ENCODE measurements at regions of chr12 and their contacts with region 1.

Region 1: DNA sequence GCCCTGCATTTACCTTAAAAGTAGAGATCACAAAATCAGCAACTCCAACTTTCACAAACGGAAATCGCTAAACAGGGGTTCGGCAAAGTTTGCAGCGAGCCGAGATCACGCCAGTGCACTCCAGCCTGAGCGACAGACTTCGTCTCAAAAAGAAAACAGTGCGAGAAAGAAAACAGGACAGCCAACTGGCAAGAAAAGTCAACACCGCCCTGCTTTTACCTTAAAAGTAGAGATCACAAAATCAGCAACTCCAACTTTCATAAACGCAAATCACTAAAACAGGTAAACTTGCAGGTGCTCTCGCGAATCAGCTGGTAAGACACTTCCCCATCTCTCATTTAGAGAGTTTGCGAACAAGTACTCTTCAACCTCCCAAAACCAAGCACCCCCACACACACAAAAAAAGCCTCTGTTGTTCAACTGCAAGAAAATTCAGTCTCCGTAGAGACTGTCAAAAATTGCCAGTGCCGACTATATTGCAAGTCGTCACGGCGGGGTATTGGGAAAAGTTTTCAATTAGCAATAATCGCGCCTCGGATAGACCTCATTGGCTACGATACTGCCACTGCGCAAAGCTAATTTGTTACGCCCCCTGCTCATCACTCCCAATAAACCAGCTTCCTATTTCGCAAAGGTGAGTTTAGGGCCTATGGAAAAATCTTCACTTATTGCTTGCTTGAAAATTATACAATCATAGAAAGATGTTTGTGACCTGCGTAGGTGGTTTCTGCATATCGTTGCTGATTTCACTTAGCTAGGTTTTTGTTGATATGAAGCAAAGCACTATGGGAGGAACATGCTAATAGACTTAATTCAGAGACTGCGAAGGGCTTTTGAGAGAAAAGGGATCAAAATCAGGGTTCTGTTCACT is at the start of gene RNU4-1:
- DNase-seq: peak; percentile 81 to 97
- H3K4me3 ChIP-seq: peak within 1 kb of the TSS; percentile 64
- H3K27ac ChIP-seq: peak within 1 kb of the TSS; percentile 99
- H3K4me1 ChIP-seq: peaks cover 19% of the 10 kb centered on the region
- H3K27me3 ChIP-seq: no peaks in the 10 kb centered on the region
- CTCF ChIP-seq: no peak
- total RNA-seq, gene RNU4-1: 1,857 and 3,341 TPM in 2 replicates

Region 2: GRCh38 chr12:120079411-120080026 is 213.4 kb before region 1 on chr12:
- CTCF ChIA-PET with region 1: no interaction called
- POLR2A ChIA-PET with region 1: interaction called, 14 read pairs
- intact Hi-C with region 1: no loop called
- DNase-seq: peak; percentile 71 to 92
- H3K4me3 ChIP-seq: peak overlapping the region; percentile 23; the same call in 1 of the 2 replicates
- H3K27ac ChIP-seq: peak overlapping the region; percentile 98
- H3K4me1 ChIP-seq: peaks cover 42% of the 10 kb centered on the region
- H3K27me3 ChIP-seq: no peaks in the 10 kb centered on the region
- CTCF ChIP-seq: no peak

Region 3: GRCh38 chr12:120199595-120200306 is 93.1 kb before region 1 on chr12:
- CTCF ChIA-PET with region 1: interaction called, 5 read pairs
- POLR2A ChIA-PET with region 1: interaction called, 58 read pairs
- intact Hi-C with region 1: loop called (anchors 1 kb)
- DNase-seq: peak; percentile 23 to 63
- H3K4me3 ChIP-seq: peak overlapping the region; percentile 64
- H3K27ac ChIP-seq: peak overlapping the region; percentile 93
- H3K4me1 ChIP-seq: peaks cover 46% of the 10 kb centered on the region
- H3K27me3 ChIP-seq: no peaks in the 10 kb centered on the region
- CTCF ChIP-seq: no peak

Region 4: DNA sequence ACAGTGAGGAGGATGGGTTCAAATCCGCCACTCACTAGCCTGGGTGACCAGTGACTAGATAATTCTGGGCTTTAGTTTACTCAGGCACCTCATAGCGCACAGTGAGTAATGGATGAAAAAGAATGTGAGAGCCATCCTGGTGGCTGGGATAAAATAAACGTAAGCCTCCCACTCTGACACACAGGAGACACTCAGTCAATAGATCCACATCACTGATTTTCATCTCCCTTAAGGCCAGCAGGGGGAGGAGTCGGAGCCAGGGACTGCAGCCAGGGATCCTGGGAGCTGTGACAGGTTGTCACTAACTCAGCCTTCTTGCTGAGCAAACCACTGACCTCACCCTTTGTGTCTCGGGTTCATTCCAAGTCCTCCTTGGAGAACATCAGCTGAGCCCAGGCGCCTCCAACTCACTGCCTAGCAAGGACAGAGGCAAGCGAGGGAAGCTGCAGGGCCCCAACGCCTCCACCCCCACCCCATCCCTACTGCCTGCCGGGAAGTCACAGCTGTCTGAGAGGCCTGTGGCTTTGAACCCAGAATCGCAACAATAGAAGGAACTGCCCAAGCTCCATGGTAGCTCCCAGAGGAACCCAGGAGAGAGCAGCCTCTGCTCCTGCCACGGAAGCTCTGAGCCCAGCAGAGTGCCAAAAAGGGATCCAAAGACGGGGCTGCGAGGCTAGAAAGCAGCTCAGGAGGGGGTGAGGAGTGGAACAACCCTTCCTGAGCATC is 58.1 kb before region 1 on chr12:
- CTCF ChIA-PET with region 1: interaction called, 11 read pairs
- POLR2A ChIA-PET with region 1: interaction called, 222 read pairs
- intact Hi-C with region 1: no loop called
- DNase-seq: peak; percentile 79
- H3K4me3 ChIP-seq: no peak overlapping the region
- H3K27ac ChIP-seq: peak overlapping the region; percentile 99; the same call in 1 of the 2 replicates
- H3K4me1 ChIP-seq: peaks cover 59% of the 10 kb centered on the region
- H3K27me3 ChIP-seq: no peaks in the 10 kb centered on the region
- CTCF ChIP-seq: peak; percentile 60

Region 5: DNA sequence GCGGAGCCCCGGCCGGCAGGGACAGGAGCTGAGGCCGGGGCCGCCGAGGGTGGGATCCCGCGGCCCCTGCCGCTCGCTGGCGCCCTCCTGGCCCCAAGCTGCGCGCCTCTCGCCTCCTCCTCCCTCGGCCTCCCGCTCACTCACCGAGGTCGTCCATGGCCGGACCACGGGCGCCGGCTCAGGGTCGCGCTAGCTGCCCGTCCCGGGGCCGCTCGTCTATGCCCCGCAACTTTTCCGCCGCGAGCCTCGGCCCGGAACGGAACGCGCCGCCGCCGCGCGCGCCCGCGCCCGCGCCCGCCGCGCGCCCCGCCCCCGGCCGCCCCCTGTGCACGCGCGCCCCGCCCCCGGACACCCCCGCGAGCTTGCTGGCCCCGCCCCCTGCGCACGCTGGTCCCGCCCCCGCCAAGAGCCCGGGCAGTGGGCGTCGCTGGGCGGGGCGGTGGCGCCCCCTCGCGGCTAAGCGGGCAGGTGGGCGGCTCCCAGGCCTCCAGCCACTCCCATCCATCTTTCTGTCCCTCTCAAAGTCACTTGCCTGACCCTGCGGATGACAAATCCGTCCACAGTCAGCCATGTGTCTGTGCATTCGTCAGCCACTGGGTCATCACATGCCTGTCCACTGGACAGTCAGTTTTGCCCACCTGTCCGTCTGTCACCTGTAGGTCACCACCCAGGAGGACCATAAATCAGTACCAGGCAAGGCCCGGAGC is 27.3 kb before region 1 on chr12 and contains the start of gene PXN:
- CTCF ChIA-PET with region 1: interaction called, 20 read pairs
- POLR2A ChIA-PET with region 1: interaction called, 12 read pairs
- intact Hi-C with region 1: loop called (anchors 2 kb)
- DNase-seq: peak; percentile 52 to 92
- H3K4me3 ChIP-seq: peak within 1 kb of the TSS; percentile 76
- H3K27ac ChIP-seq: peak within 1 kb of the TSS; percentile 19
- H3K4me1 ChIP-seq: peaks cover 33% of the 10 kb centered on the region
- H3K27me3 ChIP-seq: no peaks in the 10 kb centered on the region
- CTCF ChIP-seq: peak; percentile 65
- total RNA-seq, gene PXN: 191 and 218 TPM in 2 replicates

Region 6: GRCh38 chr12:120332041-120332440 is 39.1 kb after region 1 on chr12:
- CTCF ChIA-PET with region 1: no interaction called
- POLR2A ChIA-PET with region 1: no interaction called
- intact Hi-C with region 1: no loop called
- DNase-seq: no peak
- H3K4me3 ChIP-seq: no peak overlapping the region
- H3K27ac ChIP-seq: no peak overlapping the region
- H3K4me1 ChIP-seq: no peaks in the 10 kb centered on the region
- H3K27me3 ChIP-seq: 0 out of 2 replicates have a peak, but pooled peaks cover 4% of the 10 kb centered on the region
- CTCF ChIP-seq: no peak

Region 7: GRCh38 chr12:120445911-120446843 is 153.3 kb after region 1 on chr12 and contains the starts of genes GATC and TRIAP1:
- CTCF ChIA-PET with region 1: no interaction called
- POLR2A ChIA-PET with region 1: interaction called, 38 read pairs
- intact Hi-C with region 1: no loop called
- DNase-seq: peak; percentile 65 to 78
- H3K4me3 ChIP-seq: peak within 1 kb of the TSS; percentile 73
- H3K27ac ChIP-seq: peak within 1 kb of the TSS; percentile 45
- H3K4me1 ChIP-seq: peaks cover 17% of the 10 kb centered on the region
- H3K27me3 ChIP-seq: no peaks in the 10 kb centered on the region
- CTCF ChIP-seq: no peak
- total RNA-seq, gene GATC: 24.3 and 40.2 TPM in 2 replicates
- total RNA-seq, gene TRIAP1: 23.5 and 27.5 TPM in 2 replicates